Posterior vena cava (tissue), 2 donors: ENCODE measurements at regions of chr1 and their contacts with region 1.

Region 1: DNA sequence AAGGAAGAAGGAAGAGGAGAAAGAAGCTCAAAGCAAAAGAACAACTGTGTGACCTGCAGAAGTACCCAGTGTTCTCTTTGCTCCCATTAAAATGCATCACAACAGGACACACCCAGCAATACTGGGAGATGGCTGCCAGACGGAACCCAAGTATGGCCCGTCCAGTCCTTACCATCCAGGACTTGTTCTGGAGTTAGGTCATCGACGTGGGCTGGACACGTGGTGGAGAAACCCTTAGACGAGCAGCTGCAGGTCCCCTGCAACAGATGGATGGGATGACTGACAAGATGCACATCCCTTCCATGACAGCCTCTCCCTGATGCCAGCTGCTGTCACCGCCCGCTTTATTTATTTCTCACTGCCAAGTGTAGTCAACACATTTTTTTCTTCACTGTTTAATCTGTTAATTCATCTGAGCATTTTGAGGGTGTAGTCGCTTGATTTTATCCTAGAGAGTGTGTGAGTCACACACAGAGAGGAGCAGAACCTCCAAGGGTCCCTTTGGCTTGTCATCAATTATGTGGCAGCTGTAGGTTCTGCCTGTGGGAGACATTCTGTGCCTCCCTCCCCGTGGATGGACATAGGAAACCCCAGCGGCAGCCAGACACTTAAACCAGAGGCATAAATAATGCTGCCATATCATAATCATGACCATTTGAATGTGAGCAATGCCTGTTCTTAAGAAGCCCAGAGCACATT is 80.9 kb downstream of the ABCA4 start:
- DNase-seq: no peak

Region 2: GRCh38 chr1:94083681-94084080 is 43.7 kb after region 1 on chr1:
- intact Hi-C with region 1: loop called in 1 of 2 experiments (anchors 1 kb)
- DNase-seq: no peak

Region 3: DNA sequence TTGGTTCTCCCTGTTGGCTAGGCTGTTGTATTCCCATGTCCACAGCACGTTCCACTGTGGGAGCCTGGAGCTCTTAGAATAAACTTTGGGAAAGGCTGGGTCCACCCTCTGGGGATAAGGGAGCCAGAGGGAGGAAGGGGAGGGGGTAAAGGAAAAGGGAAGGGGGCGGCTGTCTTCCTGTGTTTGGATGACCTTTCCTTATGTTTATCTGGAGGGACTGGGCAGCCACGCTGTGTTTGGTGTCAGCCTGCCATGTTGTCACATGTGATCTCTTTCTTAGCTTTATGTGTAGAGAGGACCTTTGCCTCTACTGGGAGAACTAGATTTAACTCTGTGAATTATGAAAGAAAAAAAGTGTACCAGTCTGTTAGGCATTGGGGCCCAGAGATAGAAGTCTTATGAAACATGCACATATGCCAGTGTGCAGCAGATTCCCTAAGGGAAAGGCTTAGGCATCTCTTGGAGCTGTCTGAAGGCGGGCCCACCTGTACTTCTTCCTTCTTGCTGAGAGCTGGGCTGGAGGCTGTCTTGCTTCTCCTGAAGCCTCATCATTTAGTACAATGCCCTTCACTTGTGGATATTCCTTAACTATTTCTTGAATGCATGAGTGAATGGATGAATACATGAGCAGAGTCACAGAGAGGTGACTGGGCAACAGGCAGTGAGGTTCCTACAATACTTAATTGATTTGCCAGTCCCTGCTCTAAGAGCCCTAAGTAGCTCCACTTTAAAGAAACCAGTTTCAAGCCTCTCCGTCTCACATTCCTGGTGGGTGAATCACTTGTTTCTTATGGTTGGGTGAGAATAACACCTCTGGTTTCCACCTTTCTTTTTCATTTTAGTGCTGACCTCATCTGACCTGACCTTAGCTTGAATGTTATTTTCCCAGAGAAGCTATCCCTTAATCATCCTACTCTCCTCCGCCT is 259.9 kb after region 1 on chr1:
- intact Hi-C with region 1: no loop called
- DNase-seq: no peak